Activated CD4-positive, alpha-beta T cell treated with anti-CD3 and anti-CD28 coated beads, Interleukin-2, amount 10 ng/mL, durations not matched to agents 7 days and 5 days (primary cell): ENCODE measurements at regions of chr11 and their contacts with region 1.

Region 1: DNA sequence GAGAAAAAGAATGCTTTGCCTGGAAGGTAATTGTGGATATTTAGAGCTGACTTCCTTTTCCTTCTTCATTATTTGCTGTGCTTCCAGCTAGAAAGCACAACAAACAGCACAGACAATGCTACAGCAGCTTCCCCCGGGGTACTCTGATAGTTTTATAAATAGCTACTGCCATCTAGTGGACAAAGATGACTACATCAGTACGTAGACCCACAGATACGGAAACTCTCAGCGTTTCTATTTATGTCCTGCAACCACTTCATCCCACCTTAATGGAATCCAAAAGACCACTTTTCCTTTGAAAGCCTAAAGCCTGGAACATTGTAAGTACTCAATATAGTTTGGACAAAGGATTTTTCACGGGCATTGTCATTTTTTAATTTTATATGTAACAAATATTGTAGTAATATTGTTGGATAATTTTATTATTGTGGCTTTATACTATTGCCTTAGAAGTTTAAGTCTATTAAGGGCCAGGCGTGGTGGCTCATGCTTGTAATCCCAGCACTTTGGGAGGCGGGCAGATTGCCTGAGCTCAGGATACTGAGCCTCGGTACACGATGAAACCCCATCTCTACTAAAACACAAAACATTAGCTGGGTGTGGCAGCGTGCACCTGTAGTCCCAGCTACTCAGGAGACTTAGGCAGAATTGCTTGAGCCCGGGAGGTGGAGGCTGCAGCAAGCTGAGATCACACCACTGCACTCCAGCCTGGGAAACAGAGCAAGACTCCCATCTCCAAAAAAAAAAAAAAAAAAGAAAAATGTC is 7.5 kb downstream of the HSPA8 start:
- DNase-seq: peak; percentile 54
- H3K4me3 Mint-ChIP-seq: no peak overlapping the region
- H3K27ac Mint-ChIP-seq: peak overlapping the region; percentile 73
- H3K4me1 Mint-ChIP-seq: peaks cover 45% of the 10 kb centered on the region
- H3K27me3 Mint-ChIP-seq: no peaks in the 10 kb centered on the region

Region 2: DNA sequence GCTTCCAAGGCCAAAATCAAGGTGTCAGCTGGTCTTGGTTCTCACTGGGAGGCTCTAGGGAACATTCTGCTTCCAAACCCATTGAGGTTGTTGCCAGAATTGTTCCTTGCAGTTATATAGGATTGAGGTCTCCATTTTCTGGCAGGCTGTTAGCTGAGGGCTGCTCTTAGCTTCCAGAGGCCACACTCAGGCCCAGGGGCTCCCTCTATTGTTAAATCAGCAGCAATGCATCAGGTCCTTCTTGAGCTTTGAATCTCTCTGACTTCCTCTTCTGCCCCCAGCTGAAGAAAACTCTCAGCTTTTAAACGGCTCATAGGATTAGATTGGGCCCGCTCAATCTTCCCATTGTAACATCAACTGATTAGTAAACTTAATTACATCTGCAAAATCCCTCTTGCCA is 33.5 kb before region 1 on chr11:
- CTCF ChIA-PET with region 1: interaction called, 13 read pairs
- POLR2A ChIA-PET with region 1: no interaction called
- DNase-seq: peak; percentile 35
- H3K4me3 Mint-ChIP-seq: no peak overlapping the region
- H3K27ac Mint-ChIP-seq: no peak overlapping the region
- H3K4me1 Mint-ChIP-seq: peaks cover 7% of the 10 kb centered on the region
- H3K27me3 Mint-ChIP-seq: peaks cover 6% of the 10 kb centered on the region

Region 3: DNA sequence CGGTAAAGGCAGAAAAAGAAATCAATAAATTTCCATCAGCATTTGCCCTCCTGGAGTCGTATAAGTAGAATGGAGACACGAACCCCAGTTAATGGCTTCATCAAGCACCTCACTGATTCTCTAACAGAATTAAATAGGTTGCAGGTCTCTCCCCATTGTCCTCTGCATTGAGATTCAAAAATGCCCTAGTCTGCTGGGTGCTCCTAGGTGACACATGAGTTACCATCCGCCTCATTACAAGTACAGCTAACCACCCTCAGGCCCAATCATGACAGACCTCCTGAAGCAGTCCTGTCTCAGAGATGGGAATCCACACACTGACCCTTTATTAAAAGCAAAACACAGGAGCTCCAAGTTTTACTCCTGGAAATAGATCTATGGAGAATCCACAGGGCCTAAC is 24.0 kb before region 1 on chr11:
- CTCF ChIA-PET with region 1: interaction called, 12 read pairs
- POLR2A ChIA-PET with region 1: interaction called, 4 read pairs
- DNase-seq: no peak
- H3K4me3 Mint-ChIP-seq: no peak overlapping the region
- H3K27ac Mint-ChIP-seq: no peak overlapping the region
- H3K4me1 Mint-ChIP-seq: no peaks in the 10 kb centered on the region
- H3K27me3 Mint-ChIP-seq: no peaks in the 10 kb centered on the region